CD4-positive, alpha-beta memory T cell (primary cell): ENCODE measurements at regions of chr3 and their contacts with region 1.

Region 1: GRCh38 chr3:179653096-179653797 is 407 bp downstream of the USP13 start:
- DNase-seq: peak; percentile 64 to 72 (median 71)
- H3K4me3 ChIP-seq: peak overlapping the region; percentile 77 to 82
- H3K4me3 Mint-ChIP-seq: peak overlapping the region; percentile 87 to 97 (median 96)
- H3K27ac ChIP-seq: peak overlapping the region; percentile 61
- H3K27ac Mint-ChIP-seq: peak overlapping the region; percentile 87 to 96 (median 91)
- H3K4me1 ChIP-seq: peaks cover 21% of the 10 kb centered on the region
- H3K4me1 Mint-ChIP-seq: peaks cover 26 to 44% (median 34%) of the 10 kb centered on the region in 4 donors
- H3K27me3 ChIP-seq: no peaks in the 10 kb centered on the region
- H3K27me3 Mint-ChIP-seq: no peaks in the 10 kb centered on the region

Region 2: DNA sequence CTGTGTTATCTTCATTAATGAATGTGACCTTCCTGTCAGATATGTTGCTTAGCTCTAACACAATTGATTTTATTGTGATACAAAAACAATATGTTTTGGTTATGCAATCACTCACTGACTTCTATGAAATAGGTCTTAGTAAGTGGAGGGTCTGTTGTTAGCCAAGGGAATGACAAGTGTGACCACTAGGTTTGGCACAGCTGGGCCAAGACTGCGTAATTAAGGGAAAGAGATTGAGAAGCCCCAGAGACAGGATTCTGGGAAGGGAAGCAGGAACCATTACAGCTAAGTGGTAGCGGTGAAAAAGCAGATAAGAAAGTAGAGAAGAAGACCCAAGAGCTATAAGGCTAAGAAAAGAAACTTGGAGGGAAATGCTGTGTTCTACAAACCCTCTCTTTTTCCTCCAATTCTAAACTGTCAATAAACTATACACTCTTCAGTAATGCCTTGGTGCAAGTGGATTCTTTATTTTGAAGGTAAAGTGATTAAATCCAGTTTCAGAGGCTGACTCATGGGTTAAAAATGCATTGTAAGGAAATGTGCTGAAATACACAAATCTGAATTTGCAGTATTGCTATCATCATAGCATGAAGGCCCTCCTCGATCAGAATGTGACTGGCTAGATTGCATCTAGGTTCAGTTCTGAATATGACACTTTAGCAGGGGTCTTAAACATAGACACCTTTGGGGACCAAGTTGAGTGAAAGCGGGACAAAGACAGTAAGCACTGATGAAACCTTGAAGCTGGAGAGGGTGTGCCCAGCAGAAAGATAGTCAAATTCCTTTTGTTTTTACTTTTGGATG is 1090.9 kb before region 1 on chr3:
- CTCF ChIA-PET with region 1: no interaction called
- POLR2A ChIA-PET with region 1: no interaction called
- intact Hi-C with region 1: no loop called
- DNase-seq: no peak
- H3K4me3 ChIP-seq: no peak overlapping the region
- H3K4me3 Mint-ChIP-seq: no peak overlapping the region
- H3K27ac ChIP-seq: no peak overlapping the region
- H3K27ac Mint-ChIP-seq: no peak overlapping the region
- H3K4me1 ChIP-seq: no peaks in the 10 kb centered on the region
- H3K4me1 Mint-ChIP-seq: no peaks in the 10 kb centered on the region
- H3K27me3 ChIP-seq: no peaks in the 10 kb centered on the region
- H3K27me3 Mint-ChIP-seq: no peaks in the 10 kb centered on the region

Region 3: DNA sequence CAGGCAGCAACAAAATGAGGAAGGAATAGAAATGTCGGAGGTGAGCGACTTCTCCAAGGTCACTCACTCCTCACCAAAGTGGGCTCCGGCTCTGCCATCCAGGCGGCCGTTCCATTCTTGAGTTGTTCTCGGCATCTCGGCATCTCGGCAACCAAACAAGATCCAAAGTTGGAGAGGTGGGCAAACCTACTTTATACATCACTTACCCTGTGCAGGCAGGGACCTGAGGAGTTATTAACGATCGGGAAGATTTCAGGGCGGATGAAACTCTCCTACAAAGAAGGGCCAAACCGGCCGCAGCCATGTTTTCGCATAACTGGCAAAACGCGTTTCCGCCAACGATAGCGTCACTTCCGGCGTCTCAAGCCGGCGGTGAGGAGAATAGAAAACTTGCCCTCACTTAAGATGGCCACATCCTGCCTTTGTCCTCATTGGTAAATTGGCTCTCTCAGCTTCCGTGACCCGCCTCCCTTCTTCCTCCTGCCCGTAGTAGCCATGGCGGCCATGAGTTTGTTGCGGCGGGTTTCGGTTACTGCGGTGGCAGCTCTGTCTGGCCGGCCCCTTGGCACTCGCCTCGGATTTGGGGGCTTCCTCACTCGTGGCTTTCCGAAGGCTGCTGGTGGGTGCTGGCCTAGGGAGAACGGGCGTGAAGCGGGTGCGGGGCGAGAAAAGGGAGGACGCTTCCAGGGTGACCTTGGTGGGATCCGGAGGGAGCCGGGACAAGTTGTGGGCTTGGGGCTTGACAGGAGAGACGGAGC is 48.7 kb before region 1 on chr3 and contains the starts of genes MRPL47 and NDUFB5:
- CTCF ChIA-PET with region 1: interaction called, 6 read pairs
- POLR2A ChIA-PET with region 1: interaction called, 8 read pairs
- intact Hi-C with region 1: loop called (anchors 1 kb)
- DNase-seq: peak; percentile 89 to 97 (median 92)
- H3K4me3 ChIP-seq: peak within 1 kb of the TSS; percentile 82 to 97
- H3K4me3 Mint-ChIP-seq: peak within 1 kb of the TSS; percentile 98 to 99 (median 99)
- H3K27ac ChIP-seq: peak within 1 kb of the TSS; percentile 97
- H3K27ac Mint-ChIP-seq: peak within 1 kb of the TSS; percentile 97 to 100 (median 99)
- H3K4me1 ChIP-seq: peaks cover 37% of the 10 kb centered on the region
- H3K4me1 Mint-ChIP-seq: peaks cover 23 to 56% (median 38%) of the 10 kb centered on the region in 4 donors
- H3K27me3 ChIP-seq: no peaks in the 10 kb centered on the region
- H3K27me3 Mint-ChIP-seq: no peaks in the 10 kb centered on the region
- total RNA-seq, gene MRPL47: 16.9 to 17.3 TPM
- total RNA-seq, gene NDUFB5: 55.7 to 63.6 TPM

Region 4: DNA sequence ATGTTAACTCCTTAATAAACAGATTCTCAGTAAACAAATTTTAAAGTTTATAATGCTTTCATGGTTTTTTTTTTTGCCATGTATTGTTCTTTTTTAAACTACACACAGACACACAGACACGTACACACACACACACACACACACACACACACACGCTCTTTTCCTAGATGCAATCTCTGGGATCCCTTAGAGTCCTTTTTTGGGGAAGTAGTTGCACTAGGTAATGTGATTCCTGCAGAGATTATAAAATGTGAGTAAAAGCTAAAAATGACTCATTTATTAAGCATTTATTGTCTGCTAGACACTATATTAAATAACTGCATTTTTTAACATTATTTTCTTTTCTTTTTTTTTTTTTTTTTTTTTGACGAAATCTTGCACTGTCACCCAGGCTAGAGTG is 28.8 kb before region 1 on chr3:
- CTCF ChIA-PET with region 1: interaction called, 14 read pairs
- POLR2A ChIA-PET with region 1: no interaction called
- intact Hi-C with region 1: no loop called
- DNase-seq: no peak
- H3K4me3 ChIP-seq: no peak overlapping the region
- H3K4me3 Mint-ChIP-seq: no peak overlapping the region
- H3K27ac ChIP-seq: no peak overlapping the region
- H3K27ac Mint-ChIP-seq: no peak overlapping the region
- H3K4me1 ChIP-seq: no peaks in the 10 kb centered on the region
- H3K4me1 Mint-ChIP-seq: peaks cover 0 to 1% (median 0%) of the 10 kb centered on the region in 4 donors
- H3K27me3 ChIP-seq: no peaks in the 10 kb centered on the region
- H3K27me3 Mint-ChIP-seq: no peaks in the 10 kb centered on the region

Region 5: DNA sequence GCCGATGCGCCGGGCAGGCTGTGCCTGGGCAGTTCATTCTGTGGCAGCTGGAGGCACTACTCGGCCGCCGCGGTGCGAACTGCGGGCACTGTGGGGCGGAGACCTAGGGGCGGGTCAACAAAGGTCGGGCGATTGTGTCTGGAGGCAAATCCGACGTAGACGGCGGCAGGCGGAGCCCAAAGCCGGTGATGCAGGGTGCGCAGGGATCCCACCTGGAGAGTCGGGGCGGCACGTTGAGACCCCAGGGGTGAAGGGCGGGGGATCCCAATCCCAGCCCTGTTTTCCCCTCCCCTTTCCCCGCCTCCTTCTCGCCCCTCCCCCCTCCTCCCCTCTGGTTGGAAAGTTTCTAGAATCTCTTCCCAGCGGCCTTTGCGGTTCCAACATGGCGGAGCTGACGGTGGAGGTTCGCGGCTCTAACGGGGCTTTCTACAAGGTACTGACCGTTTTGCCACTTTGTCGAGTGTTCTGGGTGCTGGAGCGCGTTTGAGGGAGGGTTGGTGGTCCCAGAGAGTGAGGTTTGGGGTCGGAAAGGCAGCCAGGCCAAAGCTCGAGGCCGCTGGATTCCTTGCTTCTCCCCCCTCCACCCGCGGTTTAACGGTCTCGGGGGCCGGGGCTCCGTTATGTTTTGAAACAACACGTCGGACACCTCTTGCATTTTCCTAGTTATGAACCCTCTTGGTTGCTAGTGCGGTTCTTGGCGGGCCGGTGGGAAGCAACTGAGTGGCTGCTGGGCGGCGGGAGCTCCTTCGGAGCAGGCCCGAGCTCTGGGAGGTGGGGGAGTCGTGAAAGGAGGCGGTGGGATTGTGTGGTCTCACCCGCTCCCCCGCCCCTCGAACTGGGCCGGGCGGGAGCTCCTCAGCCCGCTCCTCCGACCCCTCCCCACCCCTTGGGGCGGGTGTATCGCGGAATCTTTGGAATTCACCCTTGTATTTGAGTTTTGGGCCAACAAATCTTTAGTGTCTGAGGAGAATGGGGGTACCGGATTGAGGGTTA is 1259.4 kb after region 1 on chr3 and contains the start of gene FXR1:
- CTCF ChIA-PET with region 1: no interaction called
- POLR2A ChIA-PET with region 1: no interaction called
- intact Hi-C with region 1: loop called (anchors 1 kb)
- DNase-seq: peak; percentile 89 to 91 (median 90)
- H3K4me3 ChIP-seq: peak within 1 kb of the TSS; percentile 77 to 98
- H3K4me3 Mint-ChIP-seq: peak within 1 kb of the TSS; percentile 91 to 97 (median 96)
- H3K27ac ChIP-seq: peak within 1 kb of the TSS; percentile 98
- H3K27ac Mint-ChIP-seq: peak within 1 kb of the TSS; percentile 95 to 99 (median 98)
- H3K4me1 ChIP-seq: peaks cover 51% of the 10 kb centered on the region
- H3K4me1 Mint-ChIP-seq: peaks cover 38 to 69% (median 55%) of the 10 kb centered on the region in 4 donors
- H3K27me3 ChIP-seq: no peaks in the 10 kb centered on the region
- H3K27me3 Mint-ChIP-seq: no peaks in the 10 kb centered on the region
- total RNA-seq, gene FXR1: 131 TPM